Sigmoid colon (tissue), 7 donors: ENCODE measurements at regions of chr3 and their contacts with region 1.

Region 1: DNA sequence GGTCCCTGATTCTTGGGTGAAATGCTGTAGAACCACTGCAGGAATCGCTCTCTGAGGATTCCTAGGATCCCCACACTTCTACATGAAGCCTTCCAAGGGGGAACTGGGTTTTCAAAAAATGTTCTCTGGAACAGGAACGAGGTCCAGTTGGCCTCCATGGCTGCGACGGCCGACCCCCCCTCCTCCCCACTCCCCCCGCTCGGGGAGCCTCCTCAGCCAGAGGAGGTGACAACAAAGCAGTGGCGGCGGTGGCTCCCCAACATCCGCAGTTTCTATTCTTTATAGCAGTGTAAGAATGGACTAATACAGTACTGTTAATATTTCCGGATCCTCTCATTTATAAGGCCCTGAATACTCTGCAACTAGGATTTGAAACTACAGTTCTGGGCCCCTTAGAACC is 84.0 kb upstream of the PLAAT1 start:
- DNase-seq: no peak
- H3K4me3 ChIP-seq: no peak overlapping the region
- H3K27ac ChIP-seq: no peak overlapping the region
- H3K4me1 ChIP-seq: no peaks in the 10 kb centered on the region
- H3K27me3 ChIP-seq: no peaks in the 10 kb centered on the region
- CTCF ChIP-seq: no peak
- EP300 ChIP-seq: no peak
- POLR2A ChIP-seq: no peak

Region 2: DNA sequence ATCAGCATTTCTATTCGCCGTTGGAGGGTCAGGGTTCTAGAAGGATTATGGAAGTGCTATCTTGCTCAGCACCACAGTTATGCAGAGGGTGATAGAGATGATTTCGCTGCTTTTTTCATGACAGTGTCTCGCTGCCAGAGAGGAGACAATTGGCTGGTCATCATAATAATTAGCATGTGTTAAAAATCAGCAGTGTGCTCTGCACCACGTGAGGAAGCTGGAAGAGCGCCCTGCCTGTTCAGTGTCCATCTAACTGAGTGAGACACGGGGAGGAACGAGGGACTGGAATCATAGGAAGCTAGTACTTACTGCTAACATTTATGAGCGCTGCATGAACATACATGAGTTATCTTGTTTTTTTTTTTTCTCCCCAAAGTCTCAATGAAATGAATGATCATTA is 32.2 kb before region 1 on chr3:
- intact Hi-C with region 1: no loop called
- DNase-seq: no peak
- H3K4me3 ChIP-seq: no peak overlapping the region
- H3K27ac ChIP-seq: no peak overlapping the region
- H3K4me1 ChIP-seq: no peaks in the 10 kb centered on the region
- H3K27me3 ChIP-seq: no peaks in the 10 kb centered on the region
- CTCF ChIP-seq: no peak
- EP300 ChIP-seq: no peak
- POLR2A ChIP-seq: no peak

Region 3: DNA sequence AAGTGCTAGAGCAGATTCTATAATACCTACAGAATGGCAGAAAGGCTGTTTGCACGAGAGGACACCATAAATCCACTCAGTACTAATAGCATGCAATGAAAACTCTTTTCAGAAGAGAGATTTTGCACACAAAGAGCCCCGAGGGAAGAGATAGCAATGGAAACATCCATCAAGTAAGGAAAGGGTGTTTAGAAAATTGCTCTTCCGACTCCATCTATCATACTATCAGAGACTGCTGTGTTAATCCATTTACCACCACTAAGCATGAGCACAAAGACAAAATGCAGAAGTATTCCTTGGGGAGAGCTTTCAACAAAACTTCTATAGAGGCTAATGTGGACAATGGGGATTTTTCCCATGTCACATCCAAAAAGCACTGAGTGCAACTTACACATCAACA is 11.9 kb after region 1 on chr3:
- intact Hi-C with region 1: loop called (anchors 1 kb)
- DNase-seq: no peak
- H3K4me3 ChIP-seq: no peak overlapping the region
- H3K27ac ChIP-seq: no peak overlapping the region
- H3K4me1 ChIP-seq: no peaks in the 10 kb centered on the region
- H3K27me3 ChIP-seq: no peaks in the 10 kb centered on the region
- CTCF ChIP-seq: no peak
- EP300 ChIP-seq: no peak
- POLR2A ChIP-seq: no peak